ENCODE measurements at regions of chr16 and their contacts with region 1.

Region 1: GRCh38 chr16:18983565-18984424 is at the start of gene TMC7:
- DNase-seq: peak; percentile 91 to 95
- H3K4me3 ChIP-seq: peak within 1 kb of the TSS; percentile 56
- H3K4me3 Mint-ChIP-seq: peak within 1 kb of the TSS; percentile 72
- H3K27ac Mint-ChIP-seq: peak within 1 kb of the TSS; percentile 35
- H3K4me1 ChIP-seq: no peaks in the 10 kb centered on the region
- H3K4me1 Mint-ChIP-seq: no peaks in the 10 kb centered on the region
- H3K27me3 ChIP-seq: no peaks in the 10 kb centered on the region
- H3K27me3 Mint-ChIP-seq: no peaks in the 10 kb centered on the region
- CTCF ChIP-seq: peak; percentile 63 to 98
- total RNA-seq, gene TMC7: 4.0 and 4.5 TPM in 2 replicates

Region 2: DNA sequence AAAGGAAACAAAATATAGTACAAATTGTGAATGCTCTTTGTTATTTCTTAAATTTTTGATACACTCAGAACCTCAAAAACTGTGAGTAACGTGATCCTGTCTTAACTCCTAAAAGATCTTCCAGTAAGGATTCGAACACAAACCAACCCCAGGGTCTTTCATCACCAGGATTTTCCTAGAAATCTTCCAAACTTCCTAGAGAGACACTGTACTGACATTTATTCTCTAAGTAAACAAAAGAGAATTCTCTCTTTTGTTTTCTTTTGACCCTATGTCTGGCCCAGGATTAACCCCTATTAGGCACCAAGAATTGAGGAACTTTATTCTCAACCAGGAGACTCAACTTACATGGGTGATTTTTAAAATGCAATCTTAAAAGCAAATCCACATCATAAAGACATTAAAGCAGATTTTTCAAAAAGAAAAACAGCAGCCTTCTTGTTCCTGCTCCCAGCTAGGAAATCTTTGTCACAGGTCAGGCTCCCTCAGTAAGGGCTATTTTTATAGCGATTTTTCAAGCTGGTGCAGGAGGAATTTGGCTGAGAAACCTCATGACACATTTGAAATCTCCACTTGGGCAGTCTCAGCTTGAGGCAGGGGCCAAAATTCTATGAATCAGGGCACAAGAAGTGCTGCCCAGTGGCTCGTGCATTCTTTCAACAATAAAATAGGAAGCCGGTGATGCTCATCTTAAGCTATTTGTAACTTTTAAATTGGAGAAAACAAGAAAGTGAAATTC is 51.4 kb before region 1 on chr16:
- CTCF ChIA-PET with region 1: no interaction called
- POLR2A ChIA-PET with region 1: no interaction called
- intact Hi-C with region 1: no loop called
- DNase-seq: no peak
- H3K4me3 ChIP-seq: no peak overlapping the region
- H3K4me3 Mint-ChIP-seq: no peak overlapping the region
- H3K27ac Mint-ChIP-seq: no peak overlapping the region
- H3K4me1 ChIP-seq: peaks cover 7% of the 10 kb centered on the region
- H3K4me1 Mint-ChIP-seq: peaks cover 10% of the 10 kb centered on the region
- H3K27me3 ChIP-seq: no peaks in the 10 kb centered on the region
- H3K27me3 Mint-ChIP-seq: no peaks in the 10 kb centered on the region
- CTCF ChIP-seq: no peak

Region 3: GRCh38 chr16:19001788-19002187 is 18.0 kb after region 1 on chr16:
- CTCF ChIA-PET with region 1: interaction called, 11 read pairs
- POLR2A ChIA-PET with region 1: no interaction called
- intact Hi-C with region 1: loop called (anchors 2 kb)
- DNase-seq: no peak
- H3K4me3 ChIP-seq: no peak overlapping the region
- H3K4me3 Mint-ChIP-seq: no peak overlapping the region
- H3K27ac Mint-ChIP-seq: no peak overlapping the region
- H3K4me1 ChIP-seq: peaks cover 13% of the 10 kb centered on the region
- H3K4me1 Mint-ChIP-seq: no peaks in the 10 kb centered on the region
- H3K27me3 ChIP-seq: no peaks in the 10 kb centered on the region
- H3K27me3 Mint-ChIP-seq: no peaks in the 10 kb centered on the region
- CTCF ChIP-seq: no peak